CD4-positive, alpha-beta T cell (primary cell): ENCODE measurements at regions of chr3 and their contacts with region 1.

Region 1: DNA sequence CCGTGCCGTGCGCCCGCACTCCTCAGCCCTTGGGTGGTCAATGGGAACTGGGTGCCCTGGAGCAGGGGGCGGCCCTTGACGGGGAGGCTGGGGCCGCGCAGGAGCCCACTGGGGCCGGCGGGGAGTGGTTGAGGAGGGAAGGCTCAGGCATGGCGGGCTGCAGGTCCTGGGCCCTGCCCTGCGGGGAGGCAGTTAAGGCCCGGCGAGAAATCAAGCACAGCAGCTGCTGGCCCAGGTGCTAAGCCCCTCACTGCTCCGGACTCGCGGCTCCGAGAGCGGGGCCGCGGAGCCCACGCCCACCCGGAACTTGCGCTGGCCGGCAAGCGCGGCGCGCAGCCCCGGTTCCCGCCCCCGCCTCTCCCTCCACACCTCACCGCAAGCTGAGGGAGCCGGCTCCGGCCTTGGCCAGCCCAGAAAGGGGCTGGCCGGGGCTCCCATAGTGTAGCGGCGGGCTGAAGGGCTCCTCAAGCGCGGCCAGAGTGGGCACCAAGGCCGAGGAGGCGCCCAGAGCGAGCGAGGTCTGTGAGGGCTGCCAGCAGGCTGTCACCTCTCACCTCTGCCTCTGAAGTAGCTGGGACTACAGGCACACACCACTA is 7.8 kb downstream of the GP9 start:
- DNase-seq: peak in 2 of 14 experiments; percentile 8 to 29
- ATAC-seq: peak; percentile 50
- H3K4me3 ChIP-seq: peak overlapping the region; percentile 36
- H3K4me3 Mint-ChIP-seq: peak overlapping the region; percentile 85
- H3K27ac ChIP-seq: no peak overlapping the region
- H3K27ac Mint-ChIP-seq: no peak overlapping the region
- H3K4me1 ChIP-seq: peaks cover 5% of the 10 kb centered on the region
- H3K4me1 Mint-ChIP-seq: peaks cover 11% of the 10 kb centered on the region
- H3K27me3 ChIP-seq: no peaks in the 10 kb centered on the region
- H3K27me3 Mint-ChIP-seq: peaks cover 14% of the 10 kb centered on the region
- CTCF ChIP-seq: no peak

Region 2: GRCh38 chr3:129052675-129053074 is 15.7 kb before region 1 on chr3:
- CTCF ChIA-PET with region 1: interaction called, 11 read pairs
- POLR2A ChIA-PET with region 1: interaction called, 3 read pairs
- intact Hi-C with region 1: no loop called
- DNase-seq: no peak
- ATAC-seq: no peak
- H3K4me3 ChIP-seq: no peak overlapping the region
- H3K4me3 Mint-ChIP-seq: no peak overlapping the region
- H3K27ac ChIP-seq: no peak overlapping the region
- H3K27ac Mint-ChIP-seq: no peak overlapping the region
- H3K4me1 ChIP-seq: peaks cover 5% of the 10 kb centered on the region
- H3K4me1 Mint-ChIP-seq: peaks cover 9% of the 10 kb centered on the region
- H3K27me3 ChIP-seq: no peaks in the 10 kb centered on the region
- H3K27me3 Mint-ChIP-seq: no peaks in the 10 kb centered on the region
- CTCF ChIP-seq: no peak